ENCODE measurements at regions of chr18 and their contacts with region 1.

Region 1: DNA sequence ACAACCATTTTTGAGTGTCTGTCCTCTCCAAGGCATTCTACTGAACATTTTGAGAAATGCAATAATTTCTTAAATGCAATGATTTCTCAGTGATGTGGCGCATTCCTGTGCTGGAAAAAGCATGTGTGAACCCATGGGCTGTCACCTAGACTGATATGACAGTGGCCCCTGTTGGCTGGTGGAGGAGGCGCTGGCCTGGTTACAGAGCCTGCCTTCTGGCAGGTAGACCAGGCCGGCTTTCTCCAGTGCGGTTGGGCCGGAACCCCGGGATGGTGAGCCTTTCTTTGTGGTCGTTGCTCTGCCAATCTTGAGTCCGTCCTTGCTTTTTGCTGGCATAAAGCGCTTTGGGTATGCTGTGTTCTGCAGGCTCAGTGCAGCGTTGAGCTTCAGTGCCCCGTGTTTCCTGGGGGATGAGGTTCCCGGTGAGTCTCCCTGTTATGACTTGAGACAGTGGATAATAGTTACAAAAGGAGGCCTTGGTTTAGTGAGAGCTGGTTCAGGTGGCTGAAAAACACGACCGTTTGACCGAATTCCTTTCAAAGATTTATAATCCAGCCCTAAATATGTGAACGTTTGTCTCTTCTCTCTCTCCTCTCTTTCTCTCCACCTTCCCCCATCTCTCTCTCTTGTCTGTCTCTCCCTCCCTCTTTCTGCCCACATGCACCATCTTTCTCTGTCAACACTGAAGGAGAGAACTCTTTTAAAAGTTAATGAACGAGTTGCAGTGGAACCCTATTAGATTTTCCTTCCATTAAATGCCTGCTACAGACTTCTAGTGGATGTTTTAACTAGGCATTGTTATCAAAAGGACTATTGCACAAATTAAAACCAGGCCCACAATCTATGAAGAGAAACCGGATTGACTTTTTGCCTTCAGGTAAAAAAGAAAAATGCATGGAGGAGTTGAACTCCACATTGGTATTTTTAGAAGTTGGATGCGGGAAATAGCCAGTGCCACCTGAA is 34.0 kb downstream of the TSHZ1 start:
- DNase-seq: peak; percentile 21
- ATAC-seq: peak; percentile 91
- H3K4me3 ChIP-seq: no peak overlapping the region
- H3K27ac ChIP-seq: no peak overlapping the region
- H3K4me1 ChIP-seq: peaks cover 18% of the 10 kb centered on the region
- H3K27me3 ChIP-seq: no peaks in the 10 kb centered on the region
- CTCF ChIP-seq: peak; percentile 72
- EP300 ChIP-seq: no peak
- POLR2A ChIP-seq: no peak
- RAD21 ChIP-seq: peak; percentile 60

Region 2: GRCh38 chr18:74896390-74896991 is 348.1 kb before region 1 on chr18:
- CTCF ChIA-PET with region 1: no interaction called
- POLR2A ChIA-PET with region 1: no interaction called
- in situ Hi-C with region 1: no loop called
- intact Hi-C with region 1: loop called (anchors 1 kb)
- DNase-seq: peak; percentile 62
- ATAC-seq: peak; percentile 100
- H3K4me3 ChIP-seq: no peak overlapping the region
- H3K27ac ChIP-seq: no peak overlapping the region
- H3K4me1 ChIP-seq: 0 out of 2 replicates have a peak, but pooled peaks cover 5% of the 10 kb centered on the region
- H3K27me3 ChIP-seq: no peaks in the 10 kb centered on the region
- CTCF ChIP-seq: peak; percentile 87
- EP300 ChIP-seq: no peak
- POLR2A ChIP-seq: no peak
- RAD21 ChIP-seq: peak; percentile 56

Region 3: GRCh38 chr18:75161256-75162028 is 83.2 kb before region 1 on chr18:
- CTCF ChIA-PET with region 1: no interaction called
- POLR2A ChIA-PET with region 1: no interaction called
- in situ Hi-C with region 1: no loop called
- intact Hi-C with region 1: loop called (anchors 5 kb)
- DNase-seq: peak; percentile 77
- ATAC-seq: peak; percentile 96
- H3K4me3 ChIP-seq: peak overlapping the region; percentile 53 to 80 (median 61)
- H3K27ac ChIP-seq: no peak overlapping the region
- H3K4me1 ChIP-seq: peaks cover 13% of the 10 kb centered on the region
- H3K27me3 ChIP-seq: peaks cover 0 to 17% of the 10 kb centered on the region in 2 experiments; a peak in 4 of 5 replicates
- CTCF ChIP-seq: peak; percentile 64
- EP300 ChIP-seq: no peak
- POLR2A ChIP-seq: no peak
- RAD21 ChIP-seq: no peak

Measured in HepG2 (cell line).